Mammary epithelial cell (primary cell): ENCODE measurements at regions of chr7 and their contacts with region 1.

Region 1: DNA sequence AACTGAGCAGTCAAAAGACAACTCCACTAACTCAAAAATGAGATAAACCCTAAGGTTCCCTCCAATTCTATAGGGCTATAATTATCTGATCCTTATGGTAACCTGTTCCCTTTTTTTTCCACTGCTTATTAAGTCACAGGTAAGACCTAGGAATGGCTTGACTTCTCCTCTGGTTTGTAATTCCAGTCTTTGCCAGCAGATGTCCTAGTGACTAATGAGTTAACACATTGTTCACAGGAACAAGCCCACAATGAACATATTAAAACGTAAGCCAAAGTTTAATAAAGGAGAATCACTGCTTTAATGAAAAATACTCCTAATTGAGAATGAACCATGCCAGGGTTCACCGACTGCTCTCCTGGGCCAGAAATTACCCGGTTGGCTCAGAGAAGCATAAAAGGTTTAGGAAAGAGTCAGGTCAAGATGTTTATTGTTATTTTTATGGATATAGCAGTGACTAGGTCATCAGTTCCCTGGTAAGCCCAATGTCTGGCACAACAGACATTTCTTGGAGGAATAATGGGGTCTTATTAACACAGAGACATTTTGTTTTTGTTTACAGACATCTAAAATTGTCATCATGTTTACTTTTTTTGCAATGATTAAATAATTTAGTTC is 120.1 kb downstream of the ELAPOR2 start:
- DNase-seq: peak; percentile 62
- H3K4me3 ChIP-seq: no peak overlapping the region
- H3K27ac ChIP-seq: no peak overlapping the region
- H3K4me1 ChIP-seq: no peaks in the 10 kb centered on the region
- H3K27me3 ChIP-seq: no peaks in the 10 kb centered on the region
- CTCF ChIP-seq: peak; percentile 61 to 73

Region 2: DNA sequence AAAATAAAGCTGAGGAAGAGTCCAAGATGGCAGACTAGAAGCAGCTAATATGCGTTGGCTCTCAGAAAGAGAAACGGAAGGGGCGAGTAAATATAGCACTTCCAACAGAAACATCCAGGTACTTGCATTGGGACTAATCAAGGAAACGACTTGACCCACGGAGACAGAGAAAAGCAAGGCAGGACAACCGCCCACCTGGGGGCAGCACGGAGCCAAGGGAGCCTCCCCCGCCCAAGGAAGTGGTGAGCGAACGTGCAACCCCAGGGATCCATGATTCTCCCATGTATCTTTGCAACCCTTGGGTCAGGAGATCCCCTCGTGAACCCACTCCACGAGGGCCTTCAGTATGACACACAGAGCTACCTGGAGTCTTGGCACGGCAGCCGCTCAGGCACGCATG is 341.0 kb before region 1 on chr7:
- CTCF ChIA-PET with region 1: no interaction called
- dilution Hi-C with region 1: no loop called
- in situ Hi-C with region 1: no loop called
- intact Hi-C with region 1: no loop called
- DNase-seq: no peak
- H3K4me3 ChIP-seq: no peak overlapping the region
- H3K27ac ChIP-seq: no peak overlapping the region
- H3K4me1 ChIP-seq: no peaks in the 10 kb centered on the region
- H3K27me3 ChIP-seq: no peaks in the 10 kb centered on the region
- CTCF ChIP-seq: no peak

Region 3: DNA sequence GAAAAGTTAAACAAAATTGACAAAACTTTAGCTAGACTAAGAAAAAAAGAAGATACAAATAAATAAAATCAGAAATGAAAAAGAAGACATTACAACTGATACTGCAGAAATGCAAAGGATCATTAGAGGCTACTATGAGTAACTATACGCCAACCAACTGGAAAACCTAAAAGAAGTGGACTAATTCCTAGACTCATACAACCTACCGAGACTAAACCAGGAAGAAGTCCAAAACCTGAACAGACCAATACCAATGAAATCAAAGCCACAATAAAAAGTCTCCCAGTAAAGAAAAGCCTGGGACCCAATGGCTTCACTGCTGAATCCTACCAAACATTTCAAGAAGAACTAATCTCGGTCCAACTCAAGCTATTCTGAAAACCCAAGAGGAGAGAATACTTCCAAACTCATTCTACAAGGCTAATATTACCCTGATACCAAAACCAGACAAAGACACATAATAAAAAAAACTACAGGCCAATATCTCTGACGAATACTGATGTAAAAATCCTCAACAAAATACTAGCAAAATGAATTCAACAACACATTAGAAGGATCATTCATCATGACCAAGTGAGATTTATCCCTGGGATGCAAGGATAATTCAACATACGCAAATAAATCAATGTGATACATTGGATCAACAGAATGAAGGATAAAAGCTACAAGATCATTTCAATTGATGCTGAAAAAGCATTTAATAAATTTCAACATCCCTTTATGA is 99.8 kb after region 1 on chr7:
- CTCF ChIA-PET with region 1: no interaction called
- dilution Hi-C with region 1: no loop called
- in situ Hi-C with region 1: no loop called
- intact Hi-C with region 1: loop called (anchors 5 kb)
- DNase-seq: no peak
- H3K4me3 ChIP-seq: no peak overlapping the region
- H3K27ac ChIP-seq: no peak overlapping the region
- H3K4me1 ChIP-seq: no peaks in the 10 kb centered on the region
- H3K27me3 ChIP-seq: no peaks in the 10 kb centered on the region
- CTCF ChIP-seq: no peak

Region 4: GRCh38 chr7:87129848-87130247 is 190.5 kb after region 1 on chr7:
- CTCF ChIA-PET with region 1: no interaction called
- dilution Hi-C with region 1: no loop called
- in situ Hi-C with region 1: loop called in 1 of 2 experiments (anchors 10 kb)
- intact Hi-C with region 1: no loop called
- DNase-seq: no peak
- H3K4me3 ChIP-seq: no peak overlapping the region
- H3K27ac ChIP-seq: no peak overlapping the region
- H3K4me1 ChIP-seq: no peaks in the 10 kb centered on the region
- H3K27me3 ChIP-seq: no peaks in the 10 kb centered on the region
- CTCF ChIP-seq: no peak

Region 5: GRCh38 chr7:87231256-87231655 is 291.9 kb after region 1 on chr7:
- CTCF ChIA-PET with region 1: no interaction called
- dilution Hi-C with region 1: no loop called
- in situ Hi-C with region 1: loop called in 1 of 2 experiments (anchors 10 kb)
- intact Hi-C with region 1: no loop called
- DNase-seq: no peak
- H3K4me3 ChIP-seq: no peak overlapping the region
- H3K27ac ChIP-seq: no peak overlapping the region
- H3K4me1 ChIP-seq: no peaks in the 10 kb centered on the region
- H3K27me3 ChIP-seq: peaks cover 3% of the 10 kb centered on the region
- CTCF ChIP-seq: no peak

Region 6: DNA sequence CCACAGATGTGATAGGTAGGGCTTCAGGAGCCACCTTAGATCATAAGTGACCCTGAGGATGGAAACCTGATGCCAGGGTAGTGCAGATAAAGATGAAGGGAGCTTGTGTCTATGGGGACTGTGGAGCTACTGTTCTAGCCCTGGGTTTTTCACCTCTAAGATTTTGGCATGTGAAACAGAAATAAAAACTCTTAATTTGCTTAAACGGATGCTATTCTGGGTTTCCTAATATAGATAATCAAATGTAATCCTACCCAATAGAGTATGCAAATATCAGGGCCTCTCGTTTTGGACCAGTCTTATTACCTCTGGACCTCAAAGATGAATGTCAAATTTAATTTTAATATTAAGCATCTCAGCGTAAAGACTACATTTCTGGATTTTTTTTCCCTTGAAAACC is 486.9 kb after region 1 on chr7:
- CTCF ChIA-PET with region 1: no interaction called
- dilution Hi-C with region 1: no loop called
- in situ Hi-C with region 1: no loop called
- intact Hi-C with region 1: no loop called
- DNase-seq: no peak
- H3K4me3 ChIP-seq: no peak overlapping the region
- H3K27ac ChIP-seq: no peak overlapping the region
- H3K4me1 ChIP-seq: no peaks in the 10 kb centered on the region
- H3K27me3 ChIP-seq: no peaks in the 10 kb centered on the region
- CTCF ChIP-seq: no peak